Posterior vena cava (tissue), 2 donors: ENCODE measurements at regions of chr16 and their contacts with region 1.

Region 1: DNA sequence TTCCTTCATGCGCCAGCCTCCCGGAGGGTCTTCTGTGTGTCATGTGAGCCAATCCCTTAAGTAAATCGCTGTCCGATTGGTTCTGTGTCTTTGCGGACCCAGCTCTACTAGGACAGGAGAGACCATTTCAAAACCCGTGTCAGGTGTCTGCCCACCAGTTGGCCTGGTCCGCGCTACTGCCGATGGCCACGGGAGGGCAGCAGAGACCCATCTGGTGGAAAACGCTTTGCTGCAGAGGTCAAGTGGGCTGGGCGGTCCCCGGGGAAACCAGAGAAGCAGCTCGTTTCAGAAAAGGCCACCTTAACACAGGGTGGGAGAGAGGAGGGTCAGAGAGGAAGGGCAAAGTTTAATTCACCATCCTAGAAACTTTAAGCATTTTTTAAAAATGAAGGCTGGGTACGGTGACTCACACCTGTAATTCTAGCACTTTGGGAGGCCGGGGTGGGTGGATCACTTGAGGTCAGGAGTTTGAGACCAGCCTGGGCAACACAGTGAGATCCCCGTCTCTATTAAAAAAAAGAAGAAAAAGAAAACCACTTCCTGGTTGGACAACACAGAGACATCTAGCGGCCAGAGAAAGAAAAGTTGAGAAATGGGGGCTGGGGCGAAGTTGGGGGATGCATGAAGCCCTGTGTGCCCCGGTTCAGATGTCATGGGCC is 2.8 kb upstream of the CIBAR2 start:
- DNase-seq: peak; percentile 95

Region 2: DNA sequence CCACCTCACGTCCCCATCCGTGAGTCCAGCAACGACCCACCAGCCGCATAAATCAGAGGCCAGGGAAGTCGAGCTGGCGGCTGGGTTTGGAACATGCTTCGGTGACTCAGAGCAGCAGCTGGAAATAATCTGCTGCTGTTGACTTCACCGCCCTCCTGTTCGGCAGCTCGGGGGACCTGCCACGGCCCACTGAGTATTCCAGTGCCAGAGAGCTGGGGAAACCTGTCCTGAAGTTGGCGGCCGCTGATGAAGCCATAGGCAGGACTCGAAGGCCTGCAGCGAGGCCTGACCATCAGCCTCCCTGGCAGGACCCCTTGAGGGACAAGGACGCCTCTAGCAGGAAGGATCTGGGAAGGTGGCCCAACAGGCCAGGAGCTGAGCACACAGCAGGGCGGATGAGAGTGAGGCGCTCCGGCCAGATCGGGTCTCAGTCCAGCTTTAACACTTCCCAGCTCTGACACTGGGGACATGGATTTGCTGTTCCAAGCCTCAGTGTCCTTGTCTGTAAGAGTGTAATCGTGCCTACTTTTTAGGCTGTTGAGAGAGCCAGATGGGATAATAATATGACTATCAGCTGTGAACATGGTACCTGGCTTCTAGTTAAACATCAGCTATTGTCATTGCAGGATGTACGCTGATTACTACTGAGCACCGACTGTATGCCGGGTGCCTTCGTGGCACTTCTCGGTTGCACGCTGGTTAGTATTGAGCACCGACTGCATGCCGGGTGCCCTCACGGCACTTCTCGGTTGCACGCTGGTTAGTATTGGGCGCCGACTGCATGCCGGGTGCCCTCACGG is 47.6 kb after region 1 on chr16:
- intact Hi-C with region 1: loop called in 1 of 2 experiments (anchors 2 kb)
- DNase-seq: peak; percentile 88

Region 3: DNA sequence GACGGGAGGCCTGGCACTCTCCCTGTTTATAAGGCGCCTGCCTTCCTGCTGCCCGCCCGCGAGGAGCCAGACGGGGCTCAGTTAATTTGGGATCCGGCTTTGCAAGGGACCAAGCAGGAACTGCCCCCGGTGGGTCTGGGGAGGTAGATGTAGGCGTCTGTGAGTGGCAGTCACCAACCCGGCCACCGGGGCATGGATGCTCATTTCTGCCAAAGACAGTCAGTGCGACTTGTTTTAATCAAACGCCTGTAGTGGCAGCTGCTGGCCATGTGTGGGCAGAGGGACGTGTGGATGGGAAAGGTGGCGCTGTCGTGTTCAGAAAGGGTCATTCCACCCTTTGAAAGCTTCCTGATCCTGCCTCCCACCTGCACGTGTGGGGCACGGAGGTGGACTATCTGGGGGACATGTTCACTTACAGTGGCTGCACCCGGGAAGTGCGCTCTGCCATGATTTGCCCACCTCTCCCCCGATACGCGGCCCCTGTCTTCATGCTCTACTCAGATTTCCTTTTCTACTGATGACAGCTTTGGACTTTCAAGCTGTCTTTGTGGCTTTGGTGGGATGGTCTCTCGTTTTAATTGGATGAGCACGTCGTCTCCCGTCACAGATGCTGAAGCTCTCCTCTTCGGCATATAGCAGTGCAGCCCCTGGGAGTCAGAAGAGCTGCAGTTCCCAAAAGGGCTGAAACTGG is 57.6 kb after region 1 on chr16:
- intact Hi-C with region 1: loop called in 1 of 2 experiments (anchors 5 kb)
- DNase-seq: peak; percentile 76

Region 4: DNA sequence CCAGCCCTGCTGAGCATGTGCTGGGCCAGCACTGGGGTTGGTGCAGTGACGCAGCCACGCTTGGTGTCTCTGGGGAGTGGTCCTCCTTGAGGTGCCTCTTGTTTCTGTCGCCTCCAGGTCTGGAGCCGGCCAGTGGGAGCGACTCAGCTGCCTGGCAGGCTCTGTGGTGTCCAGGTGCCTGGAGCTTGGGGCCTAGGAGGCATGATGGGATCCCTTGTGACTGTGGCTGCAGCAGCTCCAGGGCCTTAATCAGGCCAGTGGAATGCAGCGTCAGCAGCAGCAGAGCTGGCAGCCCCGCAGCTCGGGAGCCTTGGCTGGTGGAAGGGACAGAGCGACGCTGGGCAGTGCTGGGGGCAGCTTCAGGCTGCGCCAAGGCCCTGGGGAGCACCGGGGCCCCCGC is 72.0 kb after region 1 on chr16:
- intact Hi-C with region 1: no loop called
- DNase-seq: no peak

Region 5: DNA sequence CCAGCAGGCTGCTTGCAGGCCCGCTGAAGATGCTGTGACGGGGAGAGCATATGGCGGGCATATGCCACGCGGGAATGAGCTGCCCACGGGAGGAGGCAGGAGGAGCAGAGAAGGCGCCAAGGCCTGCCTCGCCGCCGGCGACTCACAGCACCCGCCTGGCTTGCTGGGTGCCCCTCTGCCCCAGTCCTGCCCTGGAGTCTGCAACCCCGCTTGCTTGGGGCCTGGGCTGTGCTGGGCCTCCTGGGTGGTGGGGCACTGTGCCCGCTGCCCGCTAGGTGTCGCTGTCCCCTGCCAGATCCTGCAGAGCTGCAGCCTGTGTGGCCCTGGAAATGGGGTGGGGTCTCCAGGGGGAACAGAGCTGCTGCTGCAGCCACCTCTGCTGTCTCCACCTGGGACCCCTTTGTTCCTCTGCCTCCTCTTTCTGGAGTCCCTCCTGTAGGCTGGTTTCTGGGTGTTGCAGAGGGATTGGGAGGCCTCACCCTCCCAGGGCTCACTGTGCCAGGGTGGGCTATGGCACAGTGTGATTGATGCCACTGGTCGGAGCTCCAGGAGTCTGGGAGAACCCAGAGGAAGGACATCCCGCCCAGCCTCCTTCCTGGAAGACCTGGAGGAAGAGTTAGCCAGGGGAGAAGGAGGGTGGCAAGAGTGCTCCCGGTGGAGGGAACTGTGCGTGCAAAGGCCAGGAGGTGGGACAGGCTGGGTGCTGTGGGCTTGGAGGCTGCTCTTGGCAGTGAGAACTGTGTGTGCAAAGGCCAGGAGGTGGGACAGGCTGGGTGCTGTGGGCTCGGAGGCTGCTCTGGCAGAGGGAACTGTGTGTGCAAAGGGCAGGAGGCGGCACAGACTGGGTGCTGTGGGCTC is 138.3 kb after region 1 on chr16:
- intact Hi-C with region 1: loop called in 1 of 2 experiments (anchors 5 kb)
- DNase-seq: no peak

Region 6: GRCh38 chr16:85564277-85565051 is 449.4 kb after region 1 on chr16:
- intact Hi-C with region 1: no loop called
- DNase-seq: no peak